ENCODE measurements at regions of chr1 and their contacts with region 1.

Region 1: DNA sequence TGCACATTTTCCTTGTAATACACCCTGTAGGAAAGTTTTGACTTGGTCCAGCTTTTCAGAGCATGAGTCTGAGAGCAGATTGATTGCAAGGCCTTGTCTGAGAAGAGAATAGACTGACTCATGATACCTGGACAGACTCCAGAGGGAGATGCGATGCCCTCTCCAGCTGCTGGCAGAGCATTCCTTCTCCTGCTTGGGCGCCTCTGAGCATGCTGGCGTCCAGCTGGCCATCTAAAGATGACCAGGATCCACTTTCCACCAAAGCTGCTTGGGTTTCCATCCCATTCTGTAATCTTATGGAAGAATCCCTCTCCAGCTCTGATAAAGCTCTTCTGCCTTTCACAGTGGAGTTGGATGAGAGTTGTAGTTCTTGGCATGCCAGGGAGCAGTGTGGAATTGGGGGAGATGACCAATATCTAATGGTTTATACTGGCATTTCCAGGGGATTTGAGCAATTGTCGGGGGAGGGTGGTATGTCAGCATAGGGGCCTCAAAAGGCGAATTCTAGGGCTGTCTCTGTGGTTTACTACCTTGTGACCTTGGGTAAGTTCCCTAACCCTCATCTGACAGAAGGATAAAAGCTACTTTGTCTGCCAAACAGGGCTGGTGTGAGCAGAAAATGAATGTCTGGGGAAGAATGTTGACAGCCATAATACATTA is 19.5 kb downstream of the SZRD1 start:
- DNase-seq: no peak
- ATAC-seq: peak; percentile 77
- H3K4me3 ChIP-seq: no peak overlapping the region
- H3K4me3 Mint-ChIP-seq: peak overlapping the region; percentile 22 to 84 (median 76)
- H3K27ac ChIP-seq: peak overlapping the region; percentile 54
- H3K27ac Mint-ChIP-seq: peak overlapping the region; percentile 39 to 91 (median 77)
- H3K4me1 ChIP-seq: peaks cover 22 to 51% of the 10 kb centered on the region in 2 donors
- H3K4me1 Mint-ChIP-seq: peaks cover 61 to 86% (median 75%) of the 10 kb centered on the region in 7 donors
- H3K27me3 ChIP-seq: no peaks in the 10 kb centered on the region
- H3K27me3 Mint-ChIP-seq: no peaks in the 10 kb centered on the region

Region 2: DNA sequence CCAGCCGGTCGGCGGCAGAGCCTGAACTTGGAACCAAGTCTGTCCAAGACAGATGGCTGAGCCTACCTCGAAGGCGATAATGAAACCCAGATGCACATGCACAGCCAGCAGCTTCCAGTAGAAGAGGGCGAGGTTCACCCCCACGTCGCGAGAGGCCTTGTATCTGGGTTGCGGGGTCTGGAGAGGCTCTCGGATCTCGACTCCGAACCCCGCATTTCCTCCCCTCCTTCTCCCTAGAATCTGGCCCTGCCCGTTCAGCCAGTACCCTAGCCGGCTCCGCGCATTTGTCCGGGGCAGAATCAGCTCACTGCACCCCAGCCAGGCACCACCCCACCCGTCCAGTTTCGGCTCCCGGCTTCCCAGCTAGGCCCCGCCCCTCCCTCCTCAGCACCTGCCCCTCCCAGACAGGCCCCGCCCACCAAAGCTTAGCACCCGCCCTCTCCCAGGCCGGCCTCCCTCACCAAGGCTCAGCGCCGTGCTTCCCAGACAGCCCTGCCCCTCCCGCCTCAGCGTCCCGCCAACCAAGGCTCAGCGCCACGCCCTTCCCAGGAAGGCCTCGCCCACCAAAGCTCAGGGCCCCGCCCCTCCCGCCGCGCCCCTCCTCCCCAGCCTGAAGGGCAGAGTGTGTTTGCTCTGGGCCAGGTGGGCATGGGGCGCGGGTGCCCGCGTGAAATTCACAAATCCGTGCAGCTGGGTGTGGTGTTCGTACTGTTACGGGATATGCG is 169.4 kb before region 1 on chr1:
- CTCF ChIA-PET with region 1: no interaction called
- POLR2A ChIA-PET with region 1: no interaction called
- intact Hi-C with region 1: no loop called
- DNase-seq: peak; percentile 80 to 94 (median 89)
- ATAC-seq: peak; percentile 99
- H3K4me3 ChIP-seq: peak overlapping the region; percentile 67
- H3K4me3 Mint-ChIP-seq: peak overlapping the region; percentile 81 to 91 (median 88)
- H3K27ac ChIP-seq: peak overlapping the region; percentile 54
- H3K27ac Mint-ChIP-seq: peak overlapping the region in 8 of 9 donors; percentile 33 to 82 (median 68)
- H3K4me1 ChIP-seq: peaks cover 0 to 6% of the 10 kb centered on the region in 2 donors
- H3K4me1 Mint-ChIP-seq: peaks cover 9 to 30% (median 23%) of the 10 kb centered on the region in 7 donors
- H3K27me3 ChIP-seq: no peaks in the 10 kb centered on the region
- H3K27me3 Mint-ChIP-seq: peaks cover 0 to 11% (median 0%) of the 10 kb centered on the region in 5 donors

Region 3: GRCh38 chr1:16420424-16421118 is 34.0 kb after region 1 on chr1:
- CTCF ChIA-PET with region 1: no interaction called
- POLR2A ChIA-PET with region 1: no interaction called
- intact Hi-C with region 1: loop called in 1 of 2 experiments (anchors 5 kb)
- DNase-seq: peak in 8 of 9 donors; percentile 42 to 66 (median 58)
- ATAC-seq: peak; percentile 92
- H3K4me3 ChIP-seq: peak overlapping the region; percentile 36
- H3K4me3 Mint-ChIP-seq: peak overlapping the region; percentile 62 to 88 (median 75)
- H3K27ac ChIP-seq: peak overlapping the region; percentile 55
- H3K27ac Mint-ChIP-seq: peak overlapping the region; percentile 69 to 95 (median 84)
- H3K4me1 ChIP-seq: peaks cover 22 to 26% of the 10 kb centered on the region in 2 donors
- H3K4me1 Mint-ChIP-seq: peaks cover 23 to 38% (median 33%) of the 10 kb centered on the region in 7 donors
- H3K27me3 ChIP-seq: no peaks in the 10 kb centered on the region
- H3K27me3 Mint-ChIP-seq: no peaks in the 10 kb centered on the region